IMR-90 (cell line): ENCODE measurements at regions of chr6 and their contacts with region 1.

Region 1: DNA sequence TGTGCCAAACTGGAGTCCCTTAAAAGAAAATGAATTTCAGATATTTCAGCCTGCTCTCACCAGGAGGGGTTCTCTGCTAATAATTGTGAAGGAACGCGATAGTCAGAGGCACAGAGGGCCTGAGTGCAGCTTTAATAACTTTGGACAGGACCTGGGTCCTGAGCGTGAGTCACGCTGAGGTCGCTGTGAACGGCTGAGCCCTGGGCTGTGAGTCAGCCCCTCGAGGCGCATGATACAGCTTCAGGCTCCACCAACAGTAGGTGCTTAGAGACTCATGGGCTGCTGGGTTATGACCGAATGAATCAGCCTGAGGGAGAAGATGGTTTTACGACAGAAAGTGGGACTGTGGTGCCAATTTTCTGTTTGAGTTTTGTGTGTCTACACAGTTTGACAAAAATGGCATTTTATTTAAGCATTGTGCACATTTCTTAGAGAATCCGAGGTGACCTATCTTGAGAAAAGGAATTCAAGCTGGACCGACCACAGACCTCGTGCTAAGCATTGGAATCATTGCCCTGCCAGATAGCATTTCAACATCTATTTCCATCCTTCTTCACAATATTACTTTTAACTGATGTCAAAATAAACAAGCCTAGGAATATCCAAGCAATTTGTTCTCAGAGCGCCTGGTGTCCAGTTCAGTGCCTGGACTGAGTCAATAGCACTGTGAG is 183.0 kb downstream of the THBS2 start:
- DNase-seq: peak; percentile 100
- ATAC-seq: peak; percentile 92
- H3K4me3 ChIP-seq: no peak overlapping the region
- H3K27ac ChIP-seq: peak overlapping the region; percentile 84; the same call in 1 of the 2 replicates
- H3K4me1 ChIP-seq: peaks cover 27% of the 10 kb centered on the region
- H3K27me3 ChIP-seq: no peaks in the 10 kb centered on the region
- CTCF ChIP-seq: peak; percentile 32
- POLR2A ChIP-seq: no peak
- RAD21 ChIP-seq: peak; percentile 52

Region 2: DNA sequence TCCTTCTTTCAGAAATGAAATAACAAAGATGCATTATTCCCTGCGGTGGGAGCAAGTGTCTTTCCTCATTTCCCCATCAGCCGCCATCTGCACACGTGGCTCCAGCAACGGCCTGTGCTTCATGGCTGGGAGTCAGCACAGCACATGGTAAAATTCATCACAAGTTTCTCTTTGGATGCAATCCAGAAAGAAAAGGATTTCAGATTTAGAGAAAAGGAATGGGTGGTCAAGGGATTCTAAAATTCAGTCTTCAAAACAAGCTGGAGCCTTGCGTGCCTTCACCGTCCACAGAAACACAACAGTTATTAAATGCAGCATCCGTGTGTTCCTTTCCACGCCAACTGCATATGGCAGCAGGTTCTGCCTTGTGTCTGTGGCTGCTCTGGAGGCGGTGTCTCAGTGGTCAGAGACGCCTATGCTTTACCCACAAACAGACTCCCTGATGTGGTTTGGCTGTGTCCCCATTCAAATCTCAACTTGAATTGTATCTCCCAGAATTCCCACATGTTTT is 75.4 kb after region 1 on chr6:
- CTCF ChIA-PET with region 1: no interaction called
- POLR2A ChIA-PET with region 1: no interaction called
- dilution Hi-C with region 1: no loop called
- in situ Hi-C with region 1: no loop called
- intact Hi-C with region 1: loop called (anchors 2 kb)
- DNase-seq: peak; percentile 59
- ATAC-seq: peak; percentile 30; the same call in 1 of the 2 replicates
- H3K4me3 ChIP-seq: no peak overlapping the region
- H3K27ac ChIP-seq: peak overlapping the region; percentile 92; the same call in 1 of the 2 replicates
- H3K4me1 ChIP-seq: peaks cover 23% of the 10 kb centered on the region
- H3K27me3 ChIP-seq: no peaks in the 10 kb centered on the region
- CTCF ChIP-seq: no peak
- POLR2A ChIP-seq: no peak
- RAD21 ChIP-seq: no peak

Region 3: GRCh38 chr6:169156108-169156792 is 85.6 kb after region 1 on chr6:
- CTCF ChIA-PET with region 1: no interaction called
- POLR2A ChIA-PET with region 1: no interaction called
- dilution Hi-C with region 1: no loop called
- in situ Hi-C with region 1: no loop called
- intact Hi-C with region 1: no loop called
- DNase-seq: peak; percentile 71
- ATAC-seq: no peak
- H3K4me3 ChIP-seq: no peak overlapping the region
- H3K27ac ChIP-seq: no peak overlapping the region
- H3K4me1 ChIP-seq: peaks cover 22% of the 10 kb centered on the region
- H3K27me3 ChIP-seq: no peaks in the 10 kb centered on the region
- CTCF ChIP-seq: no peak
- POLR2A ChIP-seq: no peak
- RAD21 ChIP-seq: no peak

Region 4: DNA sequence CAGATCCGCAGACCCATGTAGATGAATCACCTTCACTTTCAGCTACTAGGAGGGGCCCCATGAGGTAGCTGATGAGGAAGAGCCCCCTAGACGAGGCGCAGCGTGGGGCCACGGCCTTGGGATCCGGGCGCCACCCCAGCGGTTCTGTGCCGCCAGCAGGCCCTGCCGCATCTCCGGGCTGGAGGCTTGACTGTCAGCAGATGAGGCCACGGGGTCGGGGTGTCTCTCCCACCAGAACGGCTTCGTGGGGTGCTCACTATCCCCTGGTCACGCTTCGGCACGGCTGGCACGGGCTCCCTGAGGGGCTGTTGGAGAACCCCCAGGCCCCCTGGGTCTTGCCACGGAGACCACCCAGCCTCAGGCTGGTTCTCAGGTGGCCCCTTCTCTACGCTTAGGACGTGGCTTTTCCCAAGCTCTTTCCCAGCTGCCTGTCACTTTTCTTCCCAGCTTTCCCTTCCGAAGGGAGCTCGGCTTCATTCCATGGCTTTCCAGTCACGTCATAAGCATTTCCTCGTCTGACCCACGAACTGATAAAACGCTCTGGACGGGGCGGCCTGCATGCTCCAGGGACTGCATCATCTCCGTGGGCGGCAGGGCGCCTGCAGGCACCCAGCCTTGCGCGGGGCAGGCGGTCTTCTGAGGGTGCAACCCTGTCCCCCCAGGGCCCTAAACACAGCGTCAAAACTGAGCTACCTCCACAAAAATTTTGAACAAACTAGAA is 97.1 kb after region 1 on chr6:
- CTCF ChIA-PET with region 1: no interaction called
- POLR2A ChIA-PET with region 1: no interaction called
- dilution Hi-C with region 1: no loop called
- in situ Hi-C with region 1: no loop called
- intact Hi-C with region 1: loop called (anchors 1 kb)
- DNase-seq: peak; percentile 99
- ATAC-seq: peak; percentile 80
- H3K4me3 ChIP-seq: no peak overlapping the region
- H3K27ac ChIP-seq: peak overlapping the region; percentile 96
- H3K4me1 ChIP-seq: peaks cover 32% of the 10 kb centered on the region
- H3K27me3 ChIP-seq: no peaks in the 10 kb centered on the region
- CTCF ChIP-seq: no peak
- POLR2A ChIP-seq: no peak; the same call in 1 of the 2 replicates
- RAD21 ChIP-seq: peak; percentile 33; the same call in 1 of the 2 replicates

Region 5: GRCh38 chr6:169215201-169215681 is 144.6 kb after region 1 on chr6:
- CTCF ChIA-PET with region 1: no interaction called
- POLR2A ChIA-PET with region 1: no interaction called
- dilution Hi-C with region 1: no loop called
- in situ Hi-C with region 1: no loop called
- intact Hi-C with region 1: loop called (anchors 2 kb)
- DNase-seq: peak; percentile 35
- ATAC-seq: no peak
- H3K4me3 ChIP-seq: no peak overlapping the region
- H3K27ac ChIP-seq: peak overlapping the region; percentile 93
- H3K4me1 ChIP-seq: peaks cover 19% of the 10 kb centered on the region
- H3K27me3 ChIP-seq: no peaks in the 10 kb centered on the region
- CTCF ChIP-seq: no peak
- POLR2A ChIP-seq: no peak
- RAD21 ChIP-seq: no peak

Region 6: DNA sequence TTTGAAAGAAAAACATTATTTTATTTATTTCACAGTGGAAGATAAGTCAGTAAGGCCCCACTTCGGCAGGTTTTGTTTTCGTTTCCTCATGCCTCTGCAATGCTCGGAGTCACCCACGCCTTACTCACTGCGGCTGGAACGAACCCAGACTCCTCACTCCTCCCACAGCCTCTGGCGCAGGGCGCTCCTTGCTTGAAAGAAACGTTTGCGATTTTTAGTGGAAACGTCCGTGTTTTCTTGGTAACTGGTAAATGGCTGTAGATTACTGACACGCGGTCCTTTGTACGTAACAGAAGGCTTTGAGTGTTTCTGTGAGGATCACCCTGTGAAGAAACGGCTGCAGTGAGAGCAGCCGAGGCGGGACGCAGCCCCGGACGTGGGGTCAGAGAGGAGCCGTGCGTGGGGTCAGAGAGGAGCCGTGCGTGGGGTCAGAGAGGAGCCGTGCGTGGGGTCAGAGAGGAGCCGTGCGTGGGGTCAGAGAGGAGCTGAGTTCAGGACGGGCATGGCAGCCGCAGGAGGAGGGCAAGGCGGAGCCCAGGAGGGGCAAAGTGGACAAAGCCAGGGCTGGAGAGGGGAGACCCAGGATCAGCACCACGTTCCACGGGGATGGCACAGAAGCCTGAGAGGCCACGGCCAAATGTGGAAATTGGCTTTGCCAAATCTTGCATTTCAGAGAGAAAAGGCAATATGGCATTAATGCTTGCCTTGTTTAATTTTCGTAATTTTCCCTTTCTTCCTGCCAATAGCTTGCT is 381.7 kb after region 1 on chr6:
- CTCF ChIA-PET with region 1: interaction called, 4 read pairs
- POLR2A ChIA-PET with region 1: no interaction called
- dilution Hi-C with region 1: no loop called
- in situ Hi-C with region 1: no loop called
- intact Hi-C with region 1: loop called (anchors 10 kb)
- DNase-seq: peak; percentile 97
- ATAC-seq: peak; percentile 94
- H3K4me3 ChIP-seq: peak overlapping the region; percentile 12; the same call in 1 of the 2 replicates
- H3K27ac ChIP-seq: peak overlapping the region; percentile 93
- H3K4me1 ChIP-seq: peaks cover 21% of the 10 kb centered on the region
- H3K27me3 ChIP-seq: no peaks in the 10 kb centered on the region
- CTCF ChIP-seq: no peak
- POLR2A ChIP-seq: no peak
- RAD21 ChIP-seq: no peak; the same call in 1 of the 2 replicates

Region 7: DNA sequence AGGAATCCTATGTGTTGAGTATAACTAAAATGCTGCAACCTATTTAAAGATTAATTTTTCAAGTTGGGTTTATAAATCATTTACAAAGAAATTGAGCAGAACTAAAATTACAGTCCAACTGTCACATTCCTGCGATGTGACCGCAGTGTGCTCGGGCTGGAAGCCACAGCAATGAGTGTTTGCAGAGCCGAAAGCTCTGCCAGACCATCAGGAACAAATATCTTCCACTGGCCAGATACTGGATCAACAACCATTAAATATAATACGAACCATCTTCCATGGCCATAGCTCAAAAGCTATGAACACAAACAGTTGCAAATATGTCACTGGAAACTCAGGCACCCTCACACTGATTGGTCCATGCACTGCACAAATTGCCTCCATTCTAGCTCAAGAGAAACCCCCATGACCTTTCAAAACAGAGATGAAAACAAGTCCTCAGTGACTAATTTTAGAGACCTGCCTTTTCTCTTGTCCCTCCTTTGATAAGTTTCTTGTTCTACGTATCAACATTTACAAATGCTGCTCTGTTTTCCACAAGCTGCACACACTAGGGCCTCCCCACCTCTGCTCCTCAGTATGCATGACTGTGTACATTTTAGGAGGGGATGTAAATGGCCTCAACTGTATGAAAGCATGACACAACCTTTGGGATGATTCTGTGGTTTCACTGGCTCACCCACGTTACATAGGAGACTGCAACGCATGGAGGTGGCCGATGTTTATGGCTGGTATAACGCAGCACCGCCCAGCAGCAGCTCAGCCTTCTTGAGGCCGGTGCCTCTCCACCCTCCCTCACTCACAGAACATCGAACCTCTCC is 459.5 kb after region 1 on chr6:
- CTCF ChIA-PET with region 1: no interaction called
- POLR2A ChIA-PET with region 1: no interaction called
- dilution Hi-C with region 1: no loop called
- in situ Hi-C with region 1: no loop called
- intact Hi-C with region 1: loop called (anchors 10 kb)
- DNase-seq: peak; percentile 80
- ATAC-seq: peak; percentile 80
- H3K4me3 ChIP-seq: no peak overlapping the region
- H3K27ac ChIP-seq: peak overlapping the region; percentile 51
- H3K4me1 ChIP-seq: peaks cover 10% of the 10 kb centered on the region
- H3K27me3 ChIP-seq: no peaks in the 10 kb centered on the region
- CTCF ChIP-seq: no peak
- POLR2A ChIP-seq: no peak
- RAD21 ChIP-seq: no peak